ENCODE measurements at regions of chr4 and their contacts with region 1.

Region 1: DNA sequence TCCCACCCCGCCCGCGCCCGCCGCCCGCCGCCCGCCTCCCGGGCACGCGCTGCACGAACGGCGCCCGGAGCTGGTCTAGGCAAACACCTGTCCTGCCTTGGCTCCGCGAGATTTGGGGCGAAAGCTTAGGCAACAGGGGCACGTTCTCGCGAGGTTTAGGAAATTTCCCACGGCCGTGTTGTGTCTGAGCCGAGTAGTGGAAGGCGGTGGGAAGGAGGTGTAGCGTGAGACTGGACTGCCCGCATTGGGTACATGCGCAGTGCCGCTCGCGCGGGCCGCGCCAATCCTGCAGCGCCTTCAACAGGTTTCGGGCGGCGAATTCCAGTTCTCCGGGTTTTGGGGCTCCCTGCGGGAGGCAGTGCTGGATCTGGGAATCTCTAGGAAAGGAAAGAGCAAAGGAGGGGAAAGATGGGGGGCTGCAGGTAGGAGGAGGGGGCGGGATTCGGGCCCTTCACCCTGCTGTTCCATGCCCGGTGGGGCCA is 1.3 kb upstream of the RBPJ start:
- DNase-seq: peak; percentile 99
- H3K4me3 ChIP-seq: peak overlapping the region; percentile 54 to 81 (median 68)
- H3K27ac ChIP-seq: peak overlapping the region; percentile 89 to 97 (median 95)
- H3K4me1 ChIP-seq: peaks cover 3 to 45% (median 26%) of the 10 kb centered on the region in 4 donors
- H3K27me3 ChIP-seq: no peaks in the 10 kb centered on the region
- CTCF ChIP-seq: no peak
- EP300 ChIP-seq: peak in 1 of 4 donors; percentile 69
- POLR2A ChIP-seq: no peak

Region 2: DNA sequence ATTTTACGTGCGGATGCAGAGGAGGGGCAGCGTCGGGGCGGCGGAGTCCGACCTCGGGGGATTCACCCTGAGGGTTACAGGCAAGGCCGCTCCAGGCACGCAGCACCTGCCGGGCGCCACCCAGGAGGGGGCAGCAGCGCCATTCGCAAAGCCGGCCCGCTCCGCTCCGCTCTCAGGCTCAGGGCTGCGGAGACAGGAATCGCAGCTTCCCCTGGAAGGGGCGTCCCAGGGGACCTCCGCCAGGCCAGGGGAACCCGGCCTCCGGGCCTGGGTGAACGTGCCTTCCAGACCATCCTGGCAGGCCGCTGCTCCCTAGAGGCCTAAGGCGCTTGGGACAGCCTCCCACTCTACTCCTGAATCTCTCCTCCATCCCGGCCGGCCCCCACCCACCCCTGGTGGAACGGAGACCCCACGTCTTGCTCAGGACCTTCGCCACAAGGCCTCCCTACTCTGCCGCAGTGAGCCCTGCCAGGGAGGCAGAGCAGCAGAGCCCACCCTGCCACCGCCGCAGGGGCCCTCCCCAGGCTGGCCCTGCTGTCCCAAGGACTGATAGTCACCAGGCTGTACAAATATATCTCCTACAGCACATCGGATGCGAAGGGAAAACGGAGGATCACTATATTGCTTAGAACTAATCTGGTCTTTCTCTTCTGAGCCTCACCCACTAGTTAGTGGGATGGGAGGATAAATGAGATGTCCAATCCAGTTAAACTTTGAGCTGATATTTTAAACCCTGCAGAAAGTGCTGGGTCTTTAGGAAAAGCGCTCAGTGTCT is 290.5 kb before region 1 on chr4:
- intact Hi-C with region 1: loop called (anchors 5 kb)
- DNase-seq: peak; percentile 88
- H3K4me3 ChIP-seq: peak overlapping the region in 3 of 4 donors; percentile 20 to 24 (median 23)
- H3K27ac ChIP-seq: peak overlapping the region in 1 of 4 donors; percentile 36
- H3K4me1 ChIP-seq: peaks cover 0 to 28% (median 20%) of the 10 kb centered on the region in 4 donors
- H3K27me3 ChIP-seq: no peaks in the 10 kb centered on the region
- CTCF ChIP-seq: peak; percentile 67 to 93 (median 72)
- EP300 ChIP-seq: no peak
- POLR2A ChIP-seq: no peak

Region 3: DNA sequence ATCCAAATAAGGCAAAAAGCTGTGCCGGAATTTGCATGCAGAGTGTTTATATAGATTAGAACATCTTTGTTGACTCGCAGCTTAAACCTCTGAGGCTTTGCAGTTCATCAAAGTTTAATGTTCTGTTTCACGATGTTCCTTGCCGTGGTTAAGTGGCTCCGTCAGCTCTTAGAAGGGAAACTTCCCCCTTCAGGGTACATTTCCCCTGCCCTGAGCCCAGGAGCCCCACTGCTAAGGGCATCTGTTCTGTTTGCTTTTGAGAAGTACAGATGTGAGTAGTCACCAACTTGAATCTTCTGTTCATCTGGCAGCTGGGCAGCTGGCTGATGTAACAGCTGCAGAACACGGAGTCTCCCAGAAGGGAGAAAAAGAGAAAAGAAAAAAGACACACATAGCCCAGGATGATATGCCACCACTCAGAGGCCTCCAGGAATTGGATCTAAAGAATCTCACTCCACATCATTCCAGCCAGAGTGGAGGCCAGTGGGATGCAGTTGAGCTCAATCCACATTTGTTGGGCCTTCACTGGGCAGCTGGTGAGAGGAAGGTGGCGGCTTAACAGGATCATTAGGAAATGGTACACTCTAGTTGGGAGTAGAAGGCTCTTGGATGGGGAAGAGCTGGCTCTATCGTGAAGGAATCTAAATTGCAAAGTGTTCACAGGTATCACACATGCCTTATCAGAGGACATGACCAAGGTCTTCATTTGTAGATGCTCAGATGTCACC is 177.4 kb before region 1 on chr4:
- intact Hi-C with region 1: loop called (anchors 2 kb)
- DNase-seq: peak; percentile 90
- H3K4me3 ChIP-seq: no peak overlapping the region
- H3K27ac ChIP-seq: peak overlapping the region; percentile 49 to 87 (median 82)
- H3K4me1 ChIP-seq: peaks cover 0 to 57% (median 48%) of the 10 kb centered on the region in 4 donors
- H3K27me3 ChIP-seq: no peaks in the 10 kb centered on the region
- CTCF ChIP-seq: no peak
- EP300 ChIP-seq: peak; percentile 79 to 99 (median 94)
- POLR2A ChIP-seq: no peak

Region 4: GRCh38 chr4:26288355-26288909 is 31.1 kb before region 1 on chr4:
- intact Hi-C with region 1: no loop called
- DNase-seq: no peak
- H3K4me3 ChIP-seq: no peak overlapping the region
- H3K27ac ChIP-seq: peak overlapping the region in 2 of 4 donors; percentile 13 to 28
- H3K4me1 ChIP-seq: peaks cover 0 to 5% (median 0%) of the 10 kb centered on the region in 4 donors
- H3K27me3 ChIP-seq: no peaks in the 10 kb centered on the region
- CTCF ChIP-seq: no peak
- EP300 ChIP-seq: no peak
- POLR2A ChIP-seq: no peak

Region 5: GRCh38 chr4:26372525-26373172 is 53.1 kb after region 1 on chr4:
- intact Hi-C with region 1: no loop called
- DNase-seq: no peak
- H3K4me3 ChIP-seq: no peak overlapping the region
- H3K27ac ChIP-seq: peak overlapping the region in 2 of 4 donors; percentile 53 to 62
- H3K4me1 ChIP-seq: peaks cover 0 to 71% (median 49%) of the 10 kb centered on the region in 4 donors
- H3K27me3 ChIP-seq: no peaks in the 10 kb centered on the region
- CTCF ChIP-seq: no peak
- EP300 ChIP-seq: no peak
- POLR2A ChIP-seq: no peak

Region 6: GRCh38 chr4:26484032-26484515 is 164.6 kb after region 1 on chr4:
- intact Hi-C with region 1: loop called (anchors 5 kb)
- DNase-seq: peak; percentile 72
- H3K4me3 ChIP-seq: no peak overlapping the region
- H3K27ac ChIP-seq: peak overlapping the region in 3 of 4 donors; percentile 46 to 83 (median 80)
- H3K4me1 ChIP-seq: peaks cover 0 to 60% (median 32%) of the 10 kb centered on the region in 4 donors
- H3K27me3 ChIP-seq: no peaks in the 10 kb centered on the region
- CTCF ChIP-seq: no peak
- EP300 ChIP-seq: peak; percentile 72 to 92 (median 79)
- POLR2A ChIP-seq: no peak

Measured in sigmoid colon (tissue), 7 donors.